Esophagus squamous epithelium (tissue), 5 donors: ENCODE measurements at regions of chr11 and their contacts with region 1.

Region 1: DNA sequence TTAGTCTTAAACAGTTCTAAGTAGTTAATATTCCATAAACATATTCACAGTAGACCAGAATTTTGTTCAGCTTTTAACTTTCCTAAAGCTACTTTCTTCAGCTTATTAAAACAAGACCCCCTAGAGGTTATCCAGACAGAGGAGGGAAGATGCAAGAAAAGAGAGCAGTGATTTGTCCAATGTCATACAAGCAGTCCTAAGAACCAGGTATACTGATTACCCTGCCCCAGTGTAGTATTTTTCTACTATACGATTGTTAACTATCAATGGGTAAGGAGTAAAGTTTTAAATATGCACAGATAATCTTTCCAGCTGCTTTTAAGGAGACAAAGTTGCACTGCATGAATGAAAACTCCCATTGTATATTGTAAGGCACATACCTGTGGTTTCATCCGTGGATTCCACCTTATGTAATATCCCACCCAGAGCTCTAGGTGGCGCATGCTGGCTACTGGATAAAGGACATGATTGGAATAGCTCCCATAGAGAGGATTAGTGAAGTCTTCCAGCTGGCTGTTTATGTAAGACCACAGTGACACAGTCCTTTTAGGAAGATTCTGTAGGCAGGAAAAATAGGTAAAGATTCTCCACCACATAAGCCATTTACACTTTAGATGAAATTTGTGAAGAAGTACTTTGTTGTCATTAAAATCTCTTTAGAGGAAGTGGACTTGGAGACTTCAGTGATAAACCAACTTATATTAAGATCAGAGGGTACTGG is 45.6 kb downstream of the CEP57 start:
- DNase-seq: peak; percentile 2
- H3K4me3 ChIP-seq: no peak overlapping the region
- H3K27ac ChIP-seq: peak overlapping the region in 1 of 4 donors; percentile 41
- H3K4me1 ChIP-seq: peaks cover 0 to 16% (median 0%) of the 10 kb centered on the region in 3 donors
- H3K27me3 ChIP-seq: no peaks in the 10 kb centered on the region
- CTCF ChIP-seq: peak; percentile 63 to 89 (median 84)
- POLR2A ChIP-seq: no peak

Region 2: DNA sequence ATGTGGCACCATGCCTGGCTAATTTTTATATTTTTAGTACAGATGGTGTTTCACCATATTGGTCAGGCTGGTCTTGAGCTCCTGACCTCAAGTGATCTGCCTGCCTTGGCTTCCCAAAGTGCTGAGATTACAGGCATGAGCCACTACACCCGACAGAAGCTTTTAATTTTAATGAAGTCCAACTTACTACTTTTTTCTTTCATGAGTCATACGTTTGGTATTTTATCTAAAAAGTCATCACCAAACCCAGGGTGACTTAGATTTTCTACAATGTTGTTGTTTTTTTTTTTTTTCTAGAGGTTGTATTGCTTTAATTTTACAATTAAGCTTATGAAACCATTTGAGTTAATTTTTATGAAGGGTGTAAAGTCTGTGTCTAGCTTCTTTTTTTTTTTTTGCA is 588.8 kb after region 1 on chr11:
- intact Hi-C with region 1: loop called (anchors 10 kb)
- DNase-seq: no peak
- H3K4me3 ChIP-seq: no peak overlapping the region
- H3K27ac ChIP-seq: no peak overlapping the region
- H3K4me1 ChIP-seq: no peaks in the 10 kb centered on the region
- H3K27me3 ChIP-seq: peaks cover 0 to 24% (median 0%) of the 10 kb centered on the region in 4 donors
- CTCF ChIP-seq: no peak
- POLR2A ChIP-seq: no peak